Thyroid gland (tissue), 4 donors: ENCODE measurements at regions of chr17 and their contacts with region 1.

Region 1: DNA sequence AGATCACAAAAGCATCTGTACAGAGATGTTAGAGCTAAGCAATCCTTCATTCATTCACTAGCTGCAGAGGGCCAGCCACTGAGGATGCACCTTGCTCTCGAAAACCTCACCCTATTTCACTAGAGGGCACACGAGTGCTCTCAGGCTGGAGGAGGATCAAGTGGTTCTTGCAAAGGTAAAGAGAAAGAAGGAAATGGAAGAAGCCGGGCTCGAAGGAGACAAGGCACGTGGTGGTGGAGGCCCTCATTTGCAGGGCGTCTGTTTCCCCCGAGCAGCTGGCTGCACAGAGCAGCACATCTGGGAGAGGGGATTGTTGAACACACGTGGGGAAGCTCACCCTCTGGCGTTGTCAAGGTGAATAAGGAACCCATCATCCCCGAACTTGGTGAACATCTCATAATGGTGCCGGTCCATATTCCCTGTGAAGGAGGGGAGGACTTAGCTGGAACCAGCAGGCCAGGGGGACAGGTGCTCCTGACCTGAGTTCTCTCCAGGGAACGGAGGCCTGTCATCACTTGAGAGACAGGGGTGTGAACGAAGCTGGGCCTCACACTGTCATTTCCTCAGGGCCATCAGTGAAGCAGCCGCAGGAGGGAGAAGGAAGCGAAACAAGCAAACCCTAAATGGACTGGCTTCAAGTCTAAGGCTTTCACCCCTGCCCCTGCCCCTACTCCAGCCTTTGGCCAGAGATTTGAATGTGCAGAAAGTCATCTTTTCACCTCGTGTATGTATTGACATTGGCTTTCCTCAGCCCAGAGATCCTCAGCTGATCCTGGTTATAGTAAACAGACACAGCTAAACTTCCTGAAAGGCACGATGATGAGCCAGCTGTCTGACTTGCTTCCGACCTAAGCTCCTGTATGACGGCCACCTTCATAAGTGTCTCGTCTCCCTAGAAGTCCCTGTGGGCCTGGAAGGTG is 27.6 kb downstream of the PRKAR1A start:
- DNase-seq: peak; percentile 55 to 65
- H3K4me3 ChIP-seq: no peak overlapping the region
- H3K27ac ChIP-seq: peak overlapping the region in 1 of 3 donors; percentile 26
- H3K4me1 ChIP-seq: peaks cover 9 to 19% of the 10 kb centered on the region in 2 donors
- H3K27me3 ChIP-seq: no peaks in the 10 kb centered on the region
- CTCF ChIP-seq: peak in 5 of 6 experiments; percentile 16 to 68 (median 58)
- POLR2A ChIP-seq: no peak

Region 2: GRCh38 chr17:68591583-68591982 is 51.8 kb after region 1 on chr17:
- intact Hi-C with region 1: loop called (anchors 10 kb)
- DNase-seq: no peak
- H3K4me3 ChIP-seq: no peak overlapping the region
- H3K27ac ChIP-seq: no peak overlapping the region
- H3K4me1 ChIP-seq: peaks cover 20 to 40% of the 10 kb centered on the region in 2 donors
- H3K27me3 ChIP-seq: no peaks in the 10 kb centered on the region
- CTCF ChIP-seq: no peak
- POLR2A ChIP-seq: no peak

Region 3: DNA sequence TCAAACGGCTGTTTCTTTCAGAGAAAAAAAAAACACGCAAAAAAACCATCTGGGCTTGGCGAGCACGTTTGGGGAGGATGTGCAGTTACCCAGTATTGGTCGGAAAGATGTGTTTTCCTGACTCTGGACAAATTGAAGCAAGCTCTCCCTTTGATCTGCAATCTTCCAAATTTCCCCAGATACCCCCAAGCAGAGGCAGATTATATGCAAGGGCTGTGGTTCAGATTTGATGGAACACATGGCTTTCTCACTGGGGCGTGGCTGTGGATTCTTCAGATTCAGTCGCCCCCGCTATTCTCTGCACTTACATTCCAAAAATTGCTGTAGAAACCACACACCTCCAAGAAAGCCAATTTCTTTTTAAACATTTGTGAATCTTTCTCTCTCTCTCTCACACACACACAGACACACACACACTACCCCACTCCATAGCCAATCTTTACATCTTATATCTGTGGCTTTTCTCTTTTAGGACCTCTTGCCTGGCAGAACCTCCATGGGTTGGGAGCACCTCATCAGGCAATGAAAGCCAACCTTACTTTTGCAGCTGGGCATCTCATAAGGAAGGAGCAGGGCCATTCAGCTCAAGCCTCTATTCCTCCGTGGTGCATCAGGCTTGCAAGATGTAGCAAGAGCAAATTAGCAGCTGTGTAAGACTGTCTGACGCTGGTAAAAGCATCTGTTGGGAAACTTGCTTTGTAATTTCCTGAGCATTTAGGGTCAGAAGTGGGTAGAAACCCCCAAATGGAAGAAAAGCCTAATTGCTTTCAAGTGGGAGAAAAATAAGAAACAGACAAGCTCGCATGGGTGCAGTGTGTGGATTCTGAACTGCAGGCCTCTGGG is 165.3 kb after region 1 on chr17:
- intact Hi-C with region 1: no loop called
- DNase-seq: no peak
- H3K4me3 ChIP-seq: no peak overlapping the region
- H3K27ac ChIP-seq: no peak overlapping the region
- H3K4me1 ChIP-seq: no peaks in the 10 kb centered on the region
- H3K27me3 ChIP-seq: no peaks in the 10 kb centered on the region
- CTCF ChIP-seq: no peak
- POLR2A ChIP-seq: no peak

Region 4: DNA sequence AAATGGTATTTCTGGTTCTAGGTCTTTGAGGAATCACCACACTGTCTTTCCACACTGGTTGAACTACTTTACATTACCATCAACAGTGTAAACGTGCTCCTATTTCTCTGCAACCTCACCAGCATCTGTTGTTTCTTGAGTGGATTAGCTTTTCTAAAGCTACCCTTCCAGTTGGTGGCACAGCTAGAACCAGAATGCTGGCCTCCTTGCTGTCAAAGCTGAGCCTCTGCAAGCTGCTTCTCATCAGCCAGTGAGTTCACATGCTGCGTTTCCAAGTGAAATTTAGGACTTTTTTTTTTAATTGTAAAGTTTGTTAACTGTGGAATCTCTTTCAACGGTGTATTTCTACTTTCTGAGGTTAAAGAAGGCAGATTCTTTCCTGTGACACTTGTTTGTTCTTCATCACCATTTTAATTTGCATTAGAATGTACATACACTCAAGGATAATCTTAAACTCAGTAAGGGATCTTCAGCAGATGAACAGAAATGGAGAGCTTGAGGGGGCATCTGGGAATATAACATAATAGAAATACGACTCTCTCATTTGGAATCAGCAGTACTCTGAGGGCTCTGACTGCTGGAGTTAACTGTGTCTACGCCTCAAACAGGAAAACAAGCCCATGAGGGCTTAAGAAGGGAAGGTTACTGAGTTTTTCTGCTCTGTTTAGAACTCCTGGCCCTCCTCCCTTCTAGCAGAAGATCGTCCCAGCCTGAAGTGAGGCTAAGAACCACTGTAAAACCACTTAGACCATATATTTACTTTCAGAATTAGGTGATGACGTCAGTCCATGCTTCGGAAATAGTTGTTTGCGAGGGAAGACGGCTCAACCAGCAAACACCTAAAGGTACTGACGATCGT is 209.8 kb after region 1 on chr17:
- intact Hi-C with region 1: loop called (anchors 5 kb)
- DNase-seq: no peak
- H3K4me3 ChIP-seq: no peak overlapping the region
- H3K27ac ChIP-seq: peak overlapping the region in 2 of 3 donors; percentile 6 to 60
- H3K4me1 ChIP-seq: peaks cover 0 to 5% of the 10 kb centered on the region in 2 donors
- H3K27me3 ChIP-seq: no peaks in the 10 kb centered on the region
- CTCF ChIP-seq: no peak
- POLR2A ChIP-seq: peak in 1 of 2 donors; percentile 4

Region 5: GRCh38 chr17:68972119-68972704 is 432.4 kb after region 1 on chr17:
- intact Hi-C with region 1: no loop called
- DNase-seq: no peak
- H3K4me3 ChIP-seq: no peak overlapping the region
- H3K27ac ChIP-seq: no peak overlapping the region
- H3K4me1 ChIP-seq: no peaks in the 10 kb centered on the region
- H3K27me3 ChIP-seq: no peaks in the 10 kb centered on the region
- CTCF ChIP-seq: peak; percentile 18 to 55 (median 42)
- POLR2A ChIP-seq: no peak